CD8-positive, alpha-beta T cell (primary cell): ENCODE measurements at regions of chr11 and their contacts with region 1.

Region 1: DNA sequence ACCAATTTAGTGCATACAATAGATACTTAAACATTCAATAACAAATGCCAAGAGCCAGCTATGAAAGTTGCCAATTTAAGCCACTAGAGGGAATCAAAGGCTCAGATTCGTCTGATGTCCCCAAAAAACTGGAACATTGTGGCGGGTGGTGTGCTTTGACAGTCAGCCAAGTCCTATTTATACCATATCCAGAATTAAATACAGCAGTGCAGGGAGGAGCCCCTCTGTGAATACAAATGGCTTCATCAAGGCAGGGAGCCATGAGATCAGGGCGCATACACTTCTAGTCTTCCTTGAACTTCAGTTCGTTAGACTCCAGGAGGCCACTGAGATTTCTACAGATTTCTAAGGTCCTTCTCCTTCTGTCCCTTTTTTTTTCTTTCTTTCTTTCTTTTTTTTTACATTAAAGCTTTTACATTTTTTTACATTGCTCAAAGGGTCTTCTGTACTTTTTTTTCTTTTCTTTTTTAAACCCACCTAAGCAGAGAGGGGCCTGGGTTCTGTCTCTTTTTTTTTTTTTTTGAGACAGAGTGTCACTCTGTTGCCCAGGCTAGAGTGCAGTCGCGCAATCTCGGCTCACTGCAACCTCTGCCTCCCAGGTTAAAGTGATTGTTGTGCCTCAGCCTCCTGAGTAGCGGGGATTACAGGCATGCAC is 41.5 kb upstream of the HSPA8 start:
- DNase-seq: peak in 7 of 9 experiments; percentile 16 to 68 (median 38)
- ATAC-seq: peak; percentile 66
- H3K4me3 ChIP-seq: no peak overlapping the region
- H3K4me3 Mint-ChIP-seq: no peak overlapping the region
- H3K27ac ChIP-seq: no peak overlapping the region
- H3K27ac Mint-ChIP-seq: no peak overlapping the region
- H3K4me1 ChIP-seq: peaks cover 14% of the 10 kb centered on the region
- H3K4me1 Mint-ChIP-seq: peaks cover 27% of the 10 kb centered on the region
- H3K27me3 ChIP-seq: no peaks in the 10 kb centered on the region
- H3K27me3 Mint-ChIP-seq: no peaks in the 10 kb centered on the region
- CTCF ChIP-seq: peak; percentile 58

Region 2: GRCh38 chr11:123261345-123262106 is 158.1 kb after region 1 on chr11:
- CTCF ChIA-PET with region 1: interaction called, 11 read pairs
- POLR2A ChIA-PET with region 1: interaction called, 3 read pairs
- intact Hi-C with region 1: no loop called
- DNase-seq: peak; percentile 16 to 70 (median 61)
- ATAC-seq: peak; percentile 75
- H3K4me3 ChIP-seq: no peak overlapping the region
- H3K4me3 Mint-ChIP-seq: peak overlapping the region; percentile 43
- H3K27ac ChIP-seq: no peak overlapping the region
- H3K27ac Mint-ChIP-seq: no peak overlapping the region
- H3K4me1 ChIP-seq: peaks cover 4% of the 10 kb centered on the region
- H3K4me1 Mint-ChIP-seq: peaks cover 5% of the 10 kb centered on the region
- H3K27me3 ChIP-seq: peaks cover 0 to 2% of the 10 kb centered on the region in 2 experiments
- H3K27me3 Mint-ChIP-seq: peaks cover 23% of the 10 kb centered on the region
- CTCF ChIP-seq: peak; percentile 63